ENCODE measurements at regions of chr20 and their contacts with region 1.

Region 1: DNA sequence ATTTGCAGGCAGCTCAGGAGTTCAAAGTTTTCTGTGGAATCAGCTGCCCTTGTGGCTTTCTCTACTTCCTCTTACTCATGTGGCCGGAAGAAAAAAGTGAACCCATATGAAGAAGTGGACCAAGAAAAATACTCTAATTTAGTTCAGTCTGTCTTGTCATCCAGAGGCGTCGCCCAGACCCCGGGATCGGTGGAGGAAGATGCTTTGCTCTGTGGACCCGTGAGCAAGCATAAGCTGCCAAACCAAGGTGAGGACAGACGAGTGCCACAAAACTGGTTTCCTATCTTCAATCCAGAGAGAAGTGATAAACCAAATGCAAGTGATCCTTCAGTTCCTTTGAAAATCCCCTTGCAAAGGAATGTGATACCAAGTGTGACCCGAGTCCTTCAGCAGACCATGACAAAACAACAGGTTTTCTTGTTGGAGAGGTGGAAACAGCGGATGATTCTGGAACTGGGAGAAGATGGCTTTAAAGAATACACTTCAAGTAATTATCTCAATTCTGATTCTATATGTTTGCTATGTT is 1.1 kb downstream of the MGME1 start:
- DNase-seq: peak; percentile 36
- H3K4me3 ChIP-seq: peak overlapping the region; percentile 52 to 95 (median 90)
- H3K27ac ChIP-seq: peak overlapping the region; percentile 97 to 100 (median 99)
- H3K4me1 ChIP-seq: peaks cover 21 to 56% (median 53%) of the 10 kb centered on the region in 4 donors
- H3K27me3 ChIP-seq: no peaks in the 10 kb centered on the region
- CTCF ChIP-seq: no peak
- EP300 ChIP-seq: no peak
- POLR2A ChIP-seq: peak; percentile 44

Region 2: GRCh38 chr20:17878912-17879602 is 90.9 kb before region 1 on chr20:
- in situ Hi-C with region 1: no loop called
- intact Hi-C with region 1: no loop called
- DNase-seq: no peak
- H3K4me3 ChIP-seq: no peak overlapping the region
- H3K27ac ChIP-seq: peak overlapping the region in 1 of 4 donors; percentile 90
- H3K4me1 ChIP-seq: peaks cover 29 to 47% (median 41%) of the 10 kb centered on the region in 4 donors
- H3K27me3 ChIP-seq: no peaks in the 10 kb centered on the region
- CTCF ChIP-seq: no peak
- EP300 ChIP-seq: no peak
- POLR2A ChIP-seq: no peak

Region 3: GRCh38 chr20:18144541-18145099 is 174.7 kb after region 1 on chr20:
- in situ Hi-C with region 1: no loop called
- intact Hi-C with region 1: loop called (anchors 5 kb)
- DNase-seq: no peak
- H3K4me3 ChIP-seq: no peak overlapping the region
- H3K27ac ChIP-seq: no peak overlapping the region
- H3K4me1 ChIP-seq: peaks cover 5 to 13% (median 8%) of the 10 kb centered on the region in 4 donors
- H3K27me3 ChIP-seq: no peaks in the 10 kb centered on the region
- CTCF ChIP-seq: no peak
- EP300 ChIP-seq: no peak
- POLR2A ChIP-seq: no peak

Measured in transverse colon (tissue), 4 donors.